Activated CD8-positive, alpha-beta T cell treated with anti-CD3 and anti-CD28 coated beads for 36 hours (primary cell): ENCODE measurements at regions of chr3 and their contacts with region 1.

Region 1: GRCh38 chr3:69410250-69410649 is 24.4 kb upstream of the FRMD4B start:
- DNase-seq: peak; percentile 86
- ATAC-seq: peak; percentile 97
- H3K4me3 Mint-ChIP-seq: no peak overlapping the region
- H3K27ac Mint-ChIP-seq: no peak overlapping the region
- H3K4me1 Mint-ChIP-seq: peaks cover 5% of the 10 kb centered on the region
- H3K27me3 Mint-ChIP-seq: peaks cover 6% of the 10 kb centered on the region
- CTCF ChIP-seq: peak; percentile 95

Region 2: DNA sequence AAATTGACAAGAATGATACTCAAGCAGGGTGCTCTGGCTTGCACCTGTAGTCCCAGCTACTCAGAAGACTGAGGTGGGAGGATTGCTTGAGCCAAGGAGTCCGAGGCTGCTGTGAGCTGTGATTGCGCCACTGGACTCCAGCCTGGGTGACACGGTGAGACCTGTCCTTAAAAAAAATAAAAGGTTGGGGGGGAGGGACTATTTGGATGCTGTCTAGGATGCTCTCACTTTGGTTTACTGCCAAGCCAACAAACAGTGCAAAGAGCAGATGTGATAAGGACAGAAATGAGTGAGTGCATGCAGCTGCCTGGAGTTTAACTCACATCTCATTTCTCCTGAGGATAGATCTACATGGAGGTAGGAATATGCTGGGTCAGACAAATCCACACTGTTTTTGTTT is 154.3 kb before region 1 on chr3:
- CTCF ChIA-PET with region 1: no interaction called
- POLR2A ChIA-PET with region 1: no interaction called
- intact Hi-C with region 1: no loop called
- DNase-seq: no peak
- ATAC-seq: no peak
- H3K4me3 Mint-ChIP-seq: no peak overlapping the region
- H3K27ac Mint-ChIP-seq: no peak overlapping the region
- H3K4me1 Mint-ChIP-seq: no peaks in the 10 kb centered on the region
- H3K27me3 Mint-ChIP-seq: peaks cover 3% of the 10 kb centered on the region
- CTCF ChIP-seq: no peak

Region 3: GRCh38 chr3:69324362-69325025 is 85.8 kb before region 1 on chr3:
- CTCF ChIA-PET with region 1: interaction called, 19 read pairs
- POLR2A ChIA-PET with region 1: no interaction called
- intact Hi-C with region 1: no loop called
- DNase-seq: peak; percentile 37
- ATAC-seq: peak; percentile 43
- H3K4me3 Mint-ChIP-seq: no peak overlapping the region
- H3K27ac Mint-ChIP-seq: peak overlapping the region; percentile 43
- H3K4me1 Mint-ChIP-seq: peaks cover 50% of the 10 kb centered on the region
- H3K27me3 Mint-ChIP-seq: no peaks in the 10 kb centered on the region
- CTCF ChIP-seq: peak; percentile 31

Region 4: DNA sequence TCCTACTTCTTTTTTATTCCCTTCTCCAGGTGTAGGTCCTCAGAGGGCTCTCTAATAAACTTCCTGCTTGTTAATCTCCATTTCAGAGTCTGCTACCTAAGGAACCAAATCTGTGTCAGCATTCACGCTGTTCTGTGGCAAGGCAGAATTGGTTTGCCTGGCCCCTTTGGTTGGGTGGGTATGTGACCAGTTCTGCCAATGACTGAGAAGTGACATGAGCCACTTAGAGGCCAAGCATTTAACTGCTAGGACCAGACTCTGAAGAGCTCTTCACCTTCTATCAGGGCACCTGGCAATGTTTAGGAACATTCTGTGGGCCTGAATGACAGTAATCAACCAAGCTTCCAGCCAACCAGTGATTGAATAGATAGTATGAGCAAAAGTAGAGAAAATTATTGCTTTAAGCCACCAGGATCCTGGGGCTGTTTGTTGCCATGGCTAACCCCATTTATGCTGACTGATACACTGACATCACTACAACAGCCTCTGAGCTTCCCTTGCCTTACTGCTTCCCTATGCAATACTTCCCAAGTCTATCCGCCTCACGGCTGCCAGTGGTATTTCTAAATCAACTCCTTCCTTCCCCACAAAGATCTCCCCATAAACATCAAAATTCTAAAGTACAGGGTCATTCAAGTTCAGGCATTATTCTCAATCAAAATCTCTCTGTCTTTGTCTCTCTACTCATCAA is 32.0 kb before region 1 on chr3:
- CTCF ChIA-PET with region 1: interaction called, 10 read pairs
- POLR2A ChIA-PET with region 1: no interaction called
- intact Hi-C with region 1: no loop called
- DNase-seq: no peak
- ATAC-seq: no peak
- H3K4me3 Mint-ChIP-seq: no peak overlapping the region
- H3K27ac Mint-ChIP-seq: no peak overlapping the region
- H3K4me1 Mint-ChIP-seq: no peaks in the 10 kb centered on the region
- H3K27me3 Mint-ChIP-seq: peaks cover 18% of the 10 kb centered on the region
- CTCF ChIP-seq: no peak

Region 5: DNA sequence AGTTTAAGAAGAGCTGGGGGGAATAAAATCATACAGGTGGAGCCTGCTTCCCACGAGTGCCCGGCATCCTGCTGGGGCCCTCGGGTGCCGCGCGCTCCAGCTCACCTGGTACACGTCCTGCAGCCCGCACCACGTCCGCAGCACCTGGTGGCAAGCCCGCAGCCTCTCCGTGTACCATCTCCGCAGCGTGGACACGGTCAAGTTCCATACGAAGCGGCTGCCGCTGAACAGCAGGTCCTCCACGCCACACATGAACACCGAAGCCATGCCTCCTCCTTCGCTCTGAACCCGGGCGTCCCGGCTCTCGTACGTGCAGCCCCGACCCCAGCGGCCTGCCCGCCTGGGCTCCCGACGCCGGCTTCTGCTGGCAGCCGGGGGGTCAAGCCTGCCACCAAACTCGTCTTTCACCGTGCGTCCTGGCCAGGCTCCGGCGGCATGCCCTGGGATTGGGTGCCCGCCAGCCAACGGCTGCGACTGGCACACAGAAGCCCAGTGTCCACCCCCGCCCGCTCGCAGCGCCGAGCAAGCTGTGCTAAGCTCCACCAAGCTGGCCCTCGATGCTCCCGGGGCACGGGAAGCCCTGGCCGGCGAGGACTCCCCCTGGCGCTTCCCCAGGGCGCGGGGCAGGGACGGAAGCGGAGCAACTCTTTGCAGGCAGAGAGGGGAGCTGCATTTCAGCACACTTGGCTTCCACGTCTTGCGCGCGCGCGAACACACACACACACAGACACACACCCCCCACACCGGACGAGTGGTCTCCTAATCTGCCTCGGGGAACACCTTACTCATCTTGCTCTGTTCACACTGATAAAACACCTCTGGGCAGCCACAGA is 24.3 kb before region 1 on chr3 and contains the start of gene FRMD4B:
- CTCF ChIA-PET with region 1: interaction called, 24 read pairs
- POLR2A ChIA-PET with region 1: no interaction called
- intact Hi-C with region 1: no loop called
- DNase-seq: peak; percentile 48
- ATAC-seq: peak; percentile 75
- H3K4me3 Mint-ChIP-seq: peak within 1 kb of the TSS; percentile 56
- H3K27ac Mint-ChIP-seq: no peak within 1 kb of the TSS
- H3K4me1 Mint-ChIP-seq: peaks cover 9% of the 10 kb centered on the region
- H3K27me3 Mint-ChIP-seq: peaks cover 48% of the 10 kb centered on the region
- CTCF ChIP-seq: peak; percentile 33
- total RNA-seq, gene FRMD4B: 11.7 to 11.8 TPM

Region 6: GRCh38 chr3:69425261-69425660 is 15.0 kb after region 1 on chr3:
- CTCF ChIA-PET with region 1: interaction called, 12 read pairs
- POLR2A ChIA-PET with region 1: no interaction called
- intact Hi-C with region 1: no loop called
- DNase-seq: peak; percentile 54
- ATAC-seq: peak; percentile 65
- H3K4me3 Mint-ChIP-seq: no peak overlapping the region
- H3K27ac Mint-ChIP-seq: no peak overlapping the region
- H3K4me1 Mint-ChIP-seq: peaks cover 2% of the 10 kb centered on the region
- H3K27me3 Mint-ChIP-seq: peaks cover 2% of the 10 kb centered on the region
- CTCF ChIP-seq: peak; percentile 24